ENCODE measurements at regions of chr3 and their contacts with region 1.

Region 1: DNA sequence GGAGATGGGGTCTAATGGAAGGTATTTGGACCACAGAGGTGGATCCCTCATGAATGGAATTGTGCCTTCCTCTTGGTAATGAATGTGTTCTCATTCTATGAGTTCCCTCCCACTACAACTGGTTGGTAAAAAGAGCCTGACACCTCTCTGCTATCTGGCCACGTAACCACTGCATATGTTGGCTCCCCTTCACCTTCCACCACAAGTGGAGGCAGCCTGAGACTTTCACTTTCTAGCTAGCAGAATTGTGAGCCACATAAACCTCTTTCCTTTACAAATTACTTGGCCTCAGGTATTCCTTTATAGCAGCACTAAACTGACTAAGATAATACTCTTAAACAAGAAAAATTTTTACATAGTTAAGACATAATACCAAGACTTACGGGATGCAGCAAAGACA is 155.3 kb downstream of the NR1I2 start:
- DNase-seq: peak; percentile 22
- H3K4me3 Mint-ChIP-seq: peak overlapping the region; percentile 8
- H3K27ac Mint-ChIP-seq: peak overlapping the region; percentile 42
- H3K4me1 Mint-ChIP-seq: peaks cover 18% of the 10 kb centered on the region
- H3K27me3 Mint-ChIP-seq: peaks cover 5% of the 10 kb centered on the region

Region 2: DNA sequence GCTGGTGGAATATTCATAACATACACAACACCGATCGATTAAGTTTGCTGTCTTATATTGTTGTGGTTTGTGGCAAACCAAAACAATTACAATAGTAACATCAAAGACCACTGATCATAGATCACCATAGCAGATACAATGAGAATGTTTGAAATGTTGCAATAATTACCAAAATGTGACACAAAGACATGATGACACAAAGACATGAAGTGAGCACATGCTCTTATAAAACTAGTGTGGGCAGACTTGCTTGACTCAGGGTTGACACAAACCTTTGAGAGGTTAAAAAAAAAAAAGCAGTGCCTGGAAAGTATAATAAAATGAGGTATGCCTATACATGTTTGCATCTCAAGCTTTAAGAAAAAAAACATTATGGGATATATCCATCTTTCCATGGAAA is 25.0 kb before region 1 on chr3:
- intact Hi-C with region 1: loop called (anchors 1 kb)
- DNase-seq: no peak
- H3K4me3 Mint-ChIP-seq: no peak overlapping the region
- H3K27ac Mint-ChIP-seq: peak overlapping the region; percentile 59
- H3K4me1 Mint-ChIP-seq: peaks cover 21% of the 10 kb centered on the region
- H3K27me3 Mint-ChIP-seq: peaks cover 1% of the 10 kb centered on the region

Region 3: GRCh38 chr3:119924111-119925094 is 12.8 kb before region 1 on chr3:
- intact Hi-C with region 1: no loop called
- DNase-seq: no peak
- H3K4me3 Mint-ChIP-seq: no peak overlapping the region
- H3K27ac Mint-ChIP-seq: no peak overlapping the region
- H3K4me1 Mint-ChIP-seq: peaks cover 4% of the 10 kb centered on the region
- H3K27me3 Mint-ChIP-seq: no peaks in the 10 kb centered on the region

Region 4: GRCh38 chr3:120113128-120114116 is 176.2 kb after region 1 on chr3:
- intact Hi-C with region 1: no loop called
- DNase-seq: no peak
- H3K4me3 Mint-ChIP-seq: no peak overlapping the region
- H3K27ac Mint-ChIP-seq: no peak overlapping the region
- H3K4me1 Mint-ChIP-seq: no peaks in the 10 kb centered on the region
- H3K27me3 Mint-ChIP-seq: no peaks in the 10 kb centered on the region